Gastrocnemius medialis (tissue), 4 donors: ENCODE measurements at regions of chr2 and their contacts with region 1.

Region 1: GRCh38 chr2:226721541-226721940 is 78.1 kb downstream of the IRS1 start:
- DNase-seq: peak; percentile 18 to 46
- ATAC-seq: no peak
- H3K4me3 ChIP-seq: no peak overlapping the region
- H3K27ac ChIP-seq: no peak overlapping the region
- H3K4me1 ChIP-seq: peaks cover 15 to 30% of the 10 kb centered on the region in 2 donors
- H3K27me3 ChIP-seq: no peaks in the 10 kb centered on the region
- CTCF ChIP-seq: no peak
- POLR2A ChIP-seq: no peak

Region 2: DNA sequence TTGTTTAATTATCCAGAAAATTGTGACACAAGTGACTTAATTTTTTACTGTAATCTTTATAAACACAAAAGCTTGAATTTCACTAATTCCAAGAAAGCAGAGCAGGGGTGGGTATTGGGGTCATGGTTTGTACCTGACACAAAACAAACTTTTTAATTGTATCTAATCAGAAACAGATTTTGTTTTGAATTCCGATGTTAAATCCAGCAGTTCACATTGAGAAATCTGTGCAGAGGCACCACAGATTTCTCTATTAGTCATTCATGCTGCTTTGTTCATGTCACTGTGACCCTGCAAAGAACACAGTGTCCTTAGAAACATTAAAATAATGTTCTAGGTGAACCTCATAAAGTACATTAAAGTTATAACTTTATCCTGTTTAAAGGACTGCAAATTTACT is 878.6 kb before region 1 on chr2:
- in situ Hi-C with region 1: no loop called
- intact Hi-C with region 1: loop called (anchors 5 kb)
- DNase-seq: no peak
- ATAC-seq: peak; percentile 71 to 77
- H3K4me3 ChIP-seq: no peak overlapping the region
- H3K27ac ChIP-seq: no peak overlapping the region
- H3K4me1 ChIP-seq: no peaks in the 10 kb centered on the region
- H3K27me3 ChIP-seq: no peaks in the 10 kb centered on the region
- CTCF ChIP-seq: no peak
- POLR2A ChIP-seq: no peak

Region 3: DNA sequence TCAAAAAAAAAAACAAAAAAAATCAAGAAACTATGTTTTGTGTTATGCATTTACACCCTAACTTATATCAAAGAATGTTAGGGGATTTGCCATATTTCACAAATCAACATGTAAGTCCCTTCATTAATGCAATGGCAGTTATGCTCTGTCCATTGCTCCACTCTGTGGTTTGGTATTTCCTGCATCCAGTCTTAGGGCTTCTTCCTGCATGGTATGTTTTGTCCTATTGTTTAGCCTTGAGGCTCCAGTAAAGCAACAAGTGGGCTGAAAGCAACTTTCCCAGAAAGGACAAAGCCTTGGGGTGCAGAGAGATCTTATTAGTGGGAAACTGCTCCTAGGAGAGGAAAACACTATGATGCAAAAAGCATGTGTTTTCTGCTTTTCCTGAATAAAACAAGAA is 396.0 kb before region 1 on chr2:
- in situ Hi-C with region 1: no loop called
- intact Hi-C with region 1: loop called (anchors 10 kb)
- DNase-seq: no peak
- ATAC-seq: no peak
- H3K4me3 ChIP-seq: no peak overlapping the region
- H3K27ac ChIP-seq: no peak overlapping the region
- H3K4me1 ChIP-seq: peaks cover 15 to 22% of the 10 kb centered on the region in 2 donors
- H3K27me3 ChIP-seq: no peaks in the 10 kb centered on the region
- CTCF ChIP-seq: no peak
- POLR2A ChIP-seq: no peak

Region 4: DNA sequence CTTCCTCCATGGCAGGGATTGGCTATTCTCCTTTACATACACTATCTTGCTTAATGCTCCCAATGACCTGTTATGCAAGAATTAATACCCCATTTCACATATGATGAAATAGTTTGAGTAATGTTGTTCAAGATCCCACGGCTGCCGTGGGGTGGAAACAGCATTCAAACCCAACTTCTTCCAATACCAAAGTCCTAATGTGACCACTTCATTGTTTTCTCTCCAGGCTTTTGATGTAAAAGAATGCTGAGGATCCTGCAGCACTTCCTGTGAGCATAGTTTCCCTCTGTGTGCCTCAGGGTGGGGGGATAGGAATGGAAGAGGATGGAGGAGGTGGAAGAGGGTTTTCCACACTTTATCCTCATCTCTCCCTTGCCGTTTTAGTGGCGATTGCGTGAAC is 121.4 kb before region 1 on chr2:
- in situ Hi-C with region 1: no loop called
- intact Hi-C with region 1: no loop called
- DNase-seq: no peak
- ATAC-seq: no peak
- H3K4me3 ChIP-seq: no peak overlapping the region
- H3K27ac ChIP-seq: no peak overlapping the region
- H3K4me1 ChIP-seq: peaks cover 18 to 23% of the 10 kb centered on the region in 2 donors
- H3K27me3 ChIP-seq: no peaks in the 10 kb centered on the region
- CTCF ChIP-seq: no peak
- POLR2A ChIP-seq: no peak

Region 5: GRCh38 chr2:227033471-227034148 is 312.1 kb after region 1 on chr2:
- in situ Hi-C with region 1: no loop called
- intact Hi-C with region 1: no loop called
- DNase-seq: no peak
- ATAC-seq: no peak
- H3K4me3 ChIP-seq: no peak overlapping the region
- H3K27ac ChIP-seq: no peak overlapping the region
- H3K4me1 ChIP-seq: no peaks in the 10 kb centered on the region
- H3K27me3 ChIP-seq: no peaks in the 10 kb centered on the region
- CTCF ChIP-seq: peak in 1 of 5 experiments; percentile 21
- POLR2A ChIP-seq: no peak